ENCODE measurements at regions of chr2 and their contacts with region 1.

Region 1: DNA sequence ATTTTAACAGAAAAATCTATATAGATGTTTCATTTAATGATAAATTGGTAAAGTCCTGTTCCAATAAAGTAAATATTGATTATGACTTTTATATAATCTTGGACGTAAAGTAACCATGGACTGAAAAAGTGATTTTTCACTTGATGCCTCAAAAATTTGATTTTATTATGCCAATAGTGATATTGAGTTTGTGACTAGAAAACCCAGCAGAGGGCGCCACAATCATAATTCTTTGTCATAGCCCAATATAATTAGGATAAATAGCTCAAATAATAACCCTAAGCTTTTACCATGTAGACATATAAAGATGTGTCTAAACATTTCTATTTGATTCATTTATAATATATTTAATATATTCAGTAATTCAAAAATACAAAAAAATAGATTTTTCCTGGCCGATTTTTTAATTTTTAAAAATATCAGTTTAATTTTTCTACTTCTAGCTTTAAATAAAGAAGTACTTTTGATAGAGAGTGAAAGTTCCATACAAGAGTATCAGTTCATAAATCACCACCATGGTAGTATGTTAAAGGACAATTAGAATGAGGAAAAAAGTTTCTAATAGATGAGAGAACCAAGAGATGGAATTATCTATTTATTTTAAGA is 30.7 kb downstream of the CAMKMT start:
- DNase-seq: peak; percentile 42
- H3K4me3 Mint-ChIP-seq: no peak overlapping the region
- H3K27ac Mint-ChIP-seq: no peak overlapping the region
- H3K4me1 Mint-ChIP-seq: no peaks in the 10 kb centered on the region
- H3K27me3 Mint-ChIP-seq: no peaks in the 10 kb centered on the region

Region 2: DNA sequence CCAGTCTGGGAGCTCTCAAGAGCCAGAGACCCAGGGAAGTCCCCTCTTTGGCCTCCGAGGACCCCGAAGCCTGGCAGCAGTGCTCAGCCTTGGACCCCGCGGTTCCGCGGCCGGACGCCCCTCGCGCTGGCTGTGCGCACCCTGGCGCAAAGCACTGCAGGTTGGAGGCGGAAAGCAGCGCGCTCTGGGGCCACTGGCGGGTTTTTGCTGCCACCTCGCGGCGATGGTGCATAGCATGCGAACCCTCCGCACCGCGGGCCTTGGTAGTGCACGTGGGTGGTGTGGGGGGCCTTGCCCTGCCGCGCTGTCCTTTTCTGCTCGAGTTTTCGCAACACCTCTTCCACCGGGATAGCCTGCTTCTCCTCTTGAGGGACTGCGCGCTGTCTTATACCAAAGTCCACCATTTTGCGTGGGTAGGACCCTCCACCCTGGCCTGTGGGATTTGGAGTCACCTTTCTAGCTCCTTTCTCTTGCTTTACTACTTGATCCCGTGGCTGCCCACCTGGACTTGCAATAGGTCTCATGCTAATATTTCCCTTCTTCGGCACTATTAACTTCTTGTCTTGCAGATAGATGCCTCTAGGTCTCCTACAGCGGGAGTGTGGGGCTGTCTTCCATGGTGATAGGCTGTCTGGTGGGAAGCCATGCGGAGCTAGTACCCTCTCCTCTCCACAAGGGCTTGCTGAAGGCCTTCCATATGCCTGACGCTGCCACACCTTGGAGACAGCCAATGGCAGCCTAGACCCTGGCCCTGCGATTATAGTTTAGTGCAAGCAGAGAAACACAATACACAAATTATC is 563.4 kb after region 1 on chr2:
- CTCF ChIA-PET with region 1: interaction called, 23 read pairs
- POLR2A ChIA-PET with region 1: no interaction called
- DNase-seq: peak; percentile 73
- H3K4me3 Mint-ChIP-seq: no peak overlapping the region
- H3K27ac Mint-ChIP-seq: no peak overlapping the region
- H3K4me1 Mint-ChIP-seq: peaks cover 21% of the 10 kb centered on the region
- H3K27me3 Mint-ChIP-seq: peaks cover 68% of the 10 kb centered on the region

Measured in activated CD4-positive, alpha-beta memory T cell treated with anti-CD3 and anti-CD28 coated beads, Interleukin-2, amount 10 ng/mL, durations not matched to agents 7 days and 5 days (primary cell).